ENCODE measurements at regions of chr6 and their contacts with region 1.

Region 1: GRCh38 chr6:15491255-15491985 is 171.4 kb downstream of the DTNBP1 start:
- DNase-seq: peak; percentile 68 to 98 (median 85)

Region 2: DNA sequence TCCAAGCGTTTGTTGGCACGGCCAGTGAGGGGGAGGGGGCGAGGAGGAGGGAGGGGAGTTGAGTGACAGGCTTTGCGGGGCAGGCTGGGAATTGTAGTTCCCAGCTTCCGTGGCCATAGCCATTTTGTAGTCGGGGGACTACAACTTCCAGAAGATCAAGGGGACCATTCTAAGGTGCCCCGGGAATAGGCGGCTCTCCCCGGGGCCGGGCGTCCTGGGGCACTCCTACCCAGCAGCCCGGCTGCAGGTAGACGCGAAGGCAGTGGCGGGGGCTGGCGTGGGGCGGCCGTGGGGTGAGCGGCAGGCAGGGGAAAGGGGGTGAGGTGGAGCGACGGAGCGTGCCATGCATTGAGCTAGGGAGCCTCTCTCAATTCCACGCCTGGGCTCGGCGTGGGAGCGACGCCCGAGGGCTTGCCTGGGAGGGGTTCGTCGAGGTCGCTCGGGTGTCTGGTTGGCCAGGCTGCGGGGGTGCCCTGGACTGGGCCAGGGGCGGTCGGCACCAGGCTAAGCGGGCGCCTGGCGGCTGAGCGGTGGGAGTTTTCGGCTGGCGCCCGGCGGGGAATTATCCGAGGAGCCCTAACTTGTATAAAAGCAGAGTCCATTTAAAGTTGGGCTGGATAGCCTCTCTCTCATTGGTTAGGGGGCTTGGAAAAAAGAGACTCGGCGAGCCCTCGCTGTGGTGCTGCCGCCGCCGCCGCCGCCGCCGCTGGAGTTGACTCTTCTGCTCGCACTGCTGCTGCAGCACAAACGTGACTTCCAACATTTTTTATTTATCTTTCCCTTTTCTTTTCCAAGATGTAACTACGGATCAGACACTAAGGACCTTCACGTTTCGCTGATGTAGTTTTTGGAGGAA is 245.8 kb before region 1 on chr6 and contains the start of gene JARID2:
- intact Hi-C with region 1: loop called (anchors 2 kb)
- DNase-seq: peak; percentile 95 to 99 (median 97)

Region 3: GRCh38 chr6:15399641-15400470 is 91.6 kb before region 1 on chr6:
- intact Hi-C with region 1: loop called (anchors 5 kb)
- DNase-seq: peak; percentile 65 to 96 (median 76)

Region 4: DNA sequence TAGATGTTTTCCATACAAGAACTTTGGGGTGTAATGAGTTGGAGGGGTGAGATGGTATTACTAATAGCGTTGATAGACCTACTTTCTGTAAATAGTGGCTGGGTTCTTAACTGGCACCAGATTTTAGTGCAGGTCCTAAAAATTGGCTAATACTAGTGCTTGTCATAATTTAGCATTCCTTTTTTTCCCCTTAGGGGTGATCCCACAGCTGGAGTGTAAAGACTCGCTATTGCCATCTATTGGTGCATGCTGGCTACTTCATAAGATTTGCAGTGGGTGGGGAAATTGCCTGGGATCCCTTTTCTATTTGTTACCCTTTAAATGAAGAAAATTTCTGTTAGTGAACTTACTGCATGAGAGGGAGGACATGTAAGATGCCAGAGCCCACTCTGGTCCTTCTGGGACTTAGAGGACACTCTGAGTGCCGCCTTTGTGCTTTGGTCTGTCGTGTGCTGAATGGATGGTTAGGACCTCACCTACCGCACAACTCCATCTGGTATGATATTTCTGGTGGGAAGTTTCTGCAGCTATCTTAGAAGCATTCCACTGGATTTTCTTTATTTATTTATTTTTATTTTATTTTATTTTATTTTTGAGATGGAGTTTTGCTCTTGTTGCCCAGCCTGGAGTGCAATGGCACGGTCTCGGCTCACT is 50.1 kb before region 1 on chr6:
- intact Hi-C with region 1: loop called (anchors 5 kb)
- DNase-seq: peak in 2 of 10 donors; percentile 30 to 43

Region 5: DNA sequence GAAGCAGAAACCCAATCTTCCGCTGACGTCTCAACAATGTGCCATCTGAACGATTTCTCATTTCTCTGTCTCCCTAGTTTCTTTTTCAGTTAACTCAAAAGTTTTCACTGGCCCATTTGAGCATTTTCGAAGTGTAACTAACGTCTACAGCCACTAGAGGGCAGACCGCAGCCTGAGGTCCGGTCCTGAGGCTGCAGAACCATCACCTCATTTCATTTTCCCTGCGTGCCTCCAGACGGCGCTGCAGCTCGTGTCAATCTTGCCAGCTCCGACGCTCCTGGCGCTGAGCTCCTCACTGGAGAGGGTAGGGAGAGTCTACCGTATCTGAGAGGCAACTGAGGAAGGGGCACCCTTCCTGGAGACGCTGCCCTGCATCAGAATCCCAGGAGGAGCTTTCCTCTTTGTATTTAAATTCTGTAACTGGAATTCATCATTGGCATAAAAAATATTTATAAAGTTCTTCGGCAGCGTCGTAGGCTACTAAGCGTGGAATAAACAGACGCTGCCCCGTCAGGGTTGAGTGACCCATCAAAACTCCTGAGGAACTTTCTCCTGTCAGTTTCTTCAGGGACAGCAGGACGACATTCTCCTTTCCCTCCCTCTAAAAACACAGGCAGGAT is 199.9 kb after region 1 on chr6:
- intact Hi-C with region 1: no loop called
- DNase-seq: peak; percentile 68 to 97 (median 83)